ENCODE measurements at regions of chr11 and their contacts with region 1.

Region 1: DNA sequence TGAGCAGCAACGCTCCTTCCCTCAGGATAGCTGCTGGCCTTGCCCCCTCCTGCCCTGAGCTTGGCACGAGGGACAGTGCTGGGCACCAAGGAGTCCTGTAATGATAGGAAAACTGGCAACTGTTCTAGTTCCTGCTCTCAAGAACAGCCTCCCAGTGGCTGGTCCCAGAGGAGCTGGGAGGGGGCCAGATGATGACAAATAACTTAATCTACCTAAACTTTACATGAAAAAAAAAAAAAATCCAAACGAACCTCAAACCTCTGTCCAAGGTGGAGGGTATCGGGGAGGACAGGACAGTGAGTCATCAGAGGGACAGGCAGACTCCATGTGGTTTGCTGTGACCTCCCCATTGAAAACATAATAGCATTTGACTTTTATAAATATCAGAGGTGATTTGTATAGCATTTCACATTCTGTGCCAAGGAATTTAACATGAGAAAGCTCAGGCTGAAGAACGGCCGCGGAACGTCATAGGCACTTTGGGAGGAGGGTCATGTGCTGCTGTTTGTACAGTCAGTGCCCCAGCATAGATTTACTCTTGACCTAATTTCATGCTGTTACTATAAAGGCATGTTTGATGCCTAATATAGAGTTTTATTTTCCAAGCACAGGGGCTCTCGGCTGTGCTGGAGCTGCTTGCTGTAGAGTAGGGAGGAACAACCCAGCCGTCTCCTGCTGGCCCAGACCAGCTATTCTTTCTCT is 98.2 kb upstream of the NNMT start:
- DNase-seq: peak; percentile 97
- H3K4me3 ChIP-seq: peak overlapping the region in 1 of 4 donors; percentile 6
- H3K27ac ChIP-seq: peak overlapping the region; percentile 94 to 99 (median 96)
- H3K4me1 ChIP-seq: peaks cover 0 to 99% (median 94%) of the 10 kb centered on the region in 4 donors
- H3K27me3 ChIP-seq: no peaks in the 10 kb centered on the region
- CTCF ChIP-seq: no peak
- EP300 ChIP-seq: peak; percentile 100
- POLR2A ChIP-seq: peak; percentile 11 to 61

Region 2: DNA sequence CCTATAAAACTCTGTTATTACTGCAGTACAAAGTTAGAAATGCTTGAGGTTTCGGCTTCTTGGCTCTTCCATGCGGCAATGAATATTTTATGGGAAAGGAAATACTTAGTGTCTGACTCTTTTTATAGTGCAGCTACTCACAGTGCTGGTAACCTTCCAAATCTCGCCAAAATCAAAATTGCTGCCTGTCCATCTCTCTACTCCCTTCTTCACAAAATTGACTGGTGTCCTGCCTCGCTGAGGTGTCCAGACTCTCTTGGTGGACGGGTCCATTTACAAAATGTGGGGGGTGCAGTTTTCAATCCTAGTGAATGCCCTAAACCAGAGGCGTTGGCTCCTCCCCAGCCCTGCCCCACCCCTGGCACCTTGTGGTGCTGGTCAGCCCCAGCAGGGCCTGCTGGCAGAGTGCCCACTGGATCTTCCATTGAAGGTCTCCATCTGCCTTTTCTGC is 65.0 kb before region 1 on chr11:
- intact Hi-C with region 1: loop called (anchors 2 kb)
- DNase-seq: peak; percentile 83
- H3K4me3 ChIP-seq: no peak overlapping the region
- H3K27ac ChIP-seq: peak overlapping the region; percentile 57 to 86 (median 76)
- H3K4me1 ChIP-seq: peaks cover 0 to 100% (median 100%) of the 10 kb centered on the region in 4 donors
- H3K27me3 ChIP-seq: no peaks in the 10 kb centered on the region
- CTCF ChIP-seq: no peak
- EP300 ChIP-seq: peak; percentile 44 to 70 (median 56)
- POLR2A ChIP-seq: no peak

Region 3: DNA sequence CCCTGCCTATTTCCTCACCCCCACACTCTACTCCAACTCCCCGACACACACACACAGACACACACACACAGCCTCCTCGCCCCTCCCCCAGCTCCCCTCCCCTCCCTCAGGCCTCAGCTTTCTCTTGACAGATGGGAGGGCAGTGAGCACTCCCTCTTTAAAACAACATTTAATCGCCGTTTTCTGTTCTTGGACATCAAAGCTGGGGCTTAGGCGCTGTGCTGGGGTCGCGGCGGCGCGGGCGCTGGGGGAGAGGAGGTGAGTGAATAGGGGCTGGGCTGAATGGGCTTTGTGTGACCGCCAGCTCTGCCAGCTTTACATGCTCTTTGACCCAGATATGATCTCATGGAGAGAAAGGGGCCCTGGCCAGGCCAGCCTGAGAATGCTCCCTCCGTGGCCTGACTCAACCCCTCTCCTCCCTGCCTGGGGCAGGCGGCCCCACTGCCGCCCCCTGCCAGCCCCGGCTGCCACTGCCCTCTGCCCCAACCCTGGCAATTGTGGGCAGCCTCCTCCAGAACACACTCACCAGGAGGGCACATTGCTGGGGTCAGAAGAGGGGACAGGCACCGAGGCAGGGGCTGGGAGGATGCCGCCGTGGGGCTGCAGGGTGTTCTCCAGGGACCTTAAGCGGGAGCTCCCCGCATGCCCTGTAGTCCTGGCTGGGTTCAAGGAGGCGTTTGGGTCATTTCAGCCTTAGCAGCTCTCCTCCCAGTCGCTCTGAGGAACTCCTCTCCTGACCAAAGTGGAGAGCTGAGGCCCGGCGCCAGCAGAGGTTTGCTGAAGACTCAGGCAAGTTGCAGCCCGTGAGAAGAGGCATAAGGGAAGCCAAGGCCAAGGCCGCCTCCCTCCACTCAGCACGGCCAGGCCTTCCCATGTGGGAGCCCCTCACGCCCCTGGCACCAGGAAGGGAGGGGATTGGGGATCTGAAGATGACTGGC is 59.9 kb after region 1 on chr11:
- intact Hi-C with region 1: loop called (anchors 5 kb)
- DNase-seq: peak; percentile 92
- H3K4me3 ChIP-seq: peak overlapping the region in 2 of 4 donors; percentile 11 to 13
- H3K27ac ChIP-seq: peak overlapping the region; percentile 77 to 85 (median 78)
- H3K4me1 ChIP-seq: peaks cover 0 to 63% (median 48%) of the 10 kb centered on the region in 4 donors
- H3K27me3 ChIP-seq: no peaks in the 10 kb centered on the region
- CTCF ChIP-seq: peak in 1 of 4 experiments; percentile 11
- EP300 ChIP-seq: no peak
- POLR2A ChIP-seq: no peak